Left lung (tissue), 14 donors: ENCODE measurements at regions of chr19 and their contacts with region 1.

Region 1: GRCh38 chr19:23321948-23322549 is 71.9 kb upstream of the ZNF724 start:
- DNase-seq: no peak
- ATAC-seq: no peak
- H3K4me3 ChIP-seq: no peak overlapping the region
- H3K27ac ChIP-seq: no peak overlapping the region
- H3K4me1 ChIP-seq: no peaks in the 10 kb centered on the region
- H3K27me3 ChIP-seq: no peaks in the 10 kb centered on the region
- CTCF ChIP-seq: no peak

Region 2: GRCh38 chr19:23241419-23241818 is 80.6 kb before region 1 on chr19:
- intact Hi-C with region 1: no loop called
- DNase-seq: no peak
- ATAC-seq: no peak
- H3K4me3 ChIP-seq: no peak overlapping the region
- H3K27ac ChIP-seq: no peak overlapping the region
- H3K4me1 ChIP-seq: no peaks in the 10 kb centered on the region
- H3K27me3 ChIP-seq: no peaks in the 10 kb centered on the region
- CTCF ChIP-seq: no peak

Region 3: GRCh38 chr19:23470873-23471545 is 149.0 kb after region 1 on chr19:
- intact Hi-C with region 1: loop called in 1 of 2 experiments (anchors 2 kb)
- DNase-seq: peak in 1 of 4 donors; percentile 0
- ATAC-seq: no peak
- H3K4me3 ChIP-seq: no peak overlapping the region
- H3K27ac ChIP-seq: no peak overlapping the region
- H3K4me1 ChIP-seq: no peaks in the 10 kb centered on the region
- H3K27me3 ChIP-seq: peaks cover 0 to 32% of the 10 kb centered on the region in 2 donors
- CTCF ChIP-seq: no peak